Sciatic nerve (tissue), 2 donors: ENCODE measurements at regions of chr2 and their contacts with region 1.

Region 1: GRCh38 chr2:102166189-102166845 is 20.5 kb upstream of the IL1RL2 start:
- DNase-seq: no peak
- ATAC-seq: peak; percentile 94

Region 2: DNA sequence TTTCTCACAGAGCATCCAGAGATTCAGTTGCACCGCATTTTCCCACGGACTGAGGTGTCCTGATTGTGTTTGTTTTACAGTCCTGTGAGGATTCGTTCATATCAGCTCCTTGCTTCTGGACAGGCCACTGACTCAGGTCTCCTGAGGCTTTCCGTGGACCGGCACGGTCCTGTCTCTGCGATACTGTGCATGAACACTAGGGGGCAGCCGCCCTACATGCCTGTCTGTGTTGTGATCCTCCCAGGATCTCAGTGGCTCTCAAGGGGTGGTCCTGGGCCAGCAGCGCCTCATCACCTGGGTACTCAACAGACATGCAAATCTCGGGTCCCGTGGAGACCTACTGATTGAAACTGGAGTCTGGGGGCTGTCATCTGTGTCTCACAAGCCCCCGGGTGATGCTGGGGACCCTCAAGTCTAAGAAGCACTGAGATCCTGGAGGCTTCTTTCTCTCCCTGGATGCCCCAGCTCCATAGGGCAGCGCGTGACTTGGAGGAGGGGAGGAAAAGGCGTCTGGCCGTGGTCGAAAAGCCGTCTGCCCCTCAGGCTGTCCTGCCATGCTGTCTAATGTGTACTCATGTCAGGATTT is 145.6 kb before region 1 on chr2:
- intact Hi-C with region 1: loop called (anchors 2 kb)
- DNase-seq: peak; percentile 93
- ATAC-seq: peak; percentile 95